ENCODE measurements at regions of chr1 and their contacts with region 1.

Region 1: DNA sequence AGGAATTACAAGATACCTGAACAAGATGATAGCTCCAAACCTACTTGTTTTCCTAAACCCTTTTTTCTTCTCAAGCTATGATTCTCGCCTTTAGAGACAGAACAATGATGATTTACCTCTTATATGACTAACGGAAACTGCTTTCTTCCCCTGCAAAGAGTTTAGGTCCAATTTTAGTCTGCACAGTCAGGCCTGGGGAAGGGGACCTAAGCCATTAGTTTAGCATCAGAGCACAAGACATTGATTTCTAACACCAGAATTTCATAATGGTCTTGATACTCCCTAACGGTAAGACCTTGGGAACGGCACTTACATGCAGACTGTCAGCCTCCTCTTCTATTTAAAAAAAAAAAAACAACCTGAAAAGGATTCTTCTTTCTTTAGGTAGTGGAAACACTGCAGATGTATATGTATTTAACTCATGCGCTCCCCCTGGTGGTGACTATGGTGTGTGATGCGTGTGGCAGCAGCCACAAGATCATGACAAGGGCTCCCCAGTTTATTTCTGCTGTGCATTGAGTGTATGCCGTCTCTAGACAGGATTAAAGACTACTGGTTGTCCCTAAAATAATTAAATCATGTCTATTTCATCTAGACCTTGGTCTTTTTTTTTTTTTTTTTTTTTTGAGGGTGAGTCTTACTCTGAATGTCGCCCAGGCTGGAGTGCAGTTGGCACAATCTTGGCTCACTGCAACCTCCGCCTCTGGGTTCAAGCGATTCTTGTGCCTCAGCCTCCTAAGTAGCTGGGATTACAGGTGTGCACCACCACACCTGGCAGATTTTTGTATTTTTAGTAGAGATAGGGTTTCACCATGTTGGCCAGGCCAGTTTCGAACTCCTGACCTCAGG is 37.3 kb upstream of the TMEM222 start:
- DNase-seq: peak; percentile 84
- ATAC-seq: peak; percentile 98
- H3K4me3 ChIP-seq: no peak overlapping the region
- H3K27ac ChIP-seq: no peak overlapping the region
- H3K4me1 ChIP-seq: no peaks in the 10 kb centered on the region
- H3K27me3 ChIP-seq: no peaks in the 10 kb centered on the region
- CTCF ChIP-seq: peak; percentile 89

Region 2: DNA sequence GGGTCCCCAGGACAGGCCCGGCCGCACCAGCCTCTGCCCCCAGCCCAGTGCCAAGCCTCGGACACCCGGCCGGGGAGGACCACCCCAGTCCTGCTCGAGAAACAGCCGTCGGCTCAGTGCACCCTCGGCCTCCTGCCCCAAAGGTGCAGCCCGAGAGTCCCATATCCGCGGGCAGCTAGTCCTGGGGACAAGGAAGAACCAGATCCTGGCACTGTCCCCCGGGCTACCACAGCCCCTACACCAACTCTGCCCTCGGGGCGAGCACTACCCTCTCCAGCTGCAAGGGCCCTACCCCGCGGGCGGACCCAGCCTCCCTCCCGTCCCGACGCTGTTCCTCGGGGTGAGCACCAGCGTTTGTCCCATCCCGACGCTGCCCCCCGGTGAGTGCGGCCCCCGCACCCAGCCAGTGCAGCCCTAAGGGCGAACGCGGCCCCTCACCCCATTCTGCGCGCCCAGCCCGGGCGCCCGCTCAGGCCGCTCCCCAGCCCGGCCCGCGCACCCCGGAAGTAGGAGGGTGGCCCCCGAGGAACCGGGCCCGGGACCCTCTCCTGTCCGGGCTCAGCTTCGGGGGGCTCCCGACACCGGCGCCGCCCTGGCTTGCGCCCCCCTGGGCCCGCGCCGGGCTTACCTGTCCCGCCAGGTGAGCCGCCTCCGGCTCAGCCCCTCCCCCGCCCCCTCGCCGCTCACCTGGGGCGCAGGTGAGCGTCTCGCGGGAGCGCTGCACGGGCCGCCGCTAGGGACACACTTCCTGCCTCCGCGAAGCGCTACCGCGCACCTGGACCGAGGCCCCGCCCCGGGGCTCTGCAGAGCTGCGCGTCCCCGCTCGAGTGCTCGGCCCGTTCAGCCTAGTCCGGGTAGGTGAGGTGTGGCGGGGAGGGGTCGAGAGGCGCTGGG is 324.7 kb before region 1 on chr1 and contains the start of gene KDF1:
- intact Hi-C with region 1: no loop called
- DNase-seq: peak; percentile 95
- ATAC-seq: peak; percentile 99
- H3K4me3 ChIP-seq: peak within 1 kb of the TSS; percentile 60
- H3K27ac ChIP-seq: peak within 1 kb of the TSS; percentile 60
- H3K4me1 ChIP-seq: no peaks in the 10 kb centered on the region
- H3K27me3 ChIP-seq: peaks cover 32% of the 10 kb centered on the region
- CTCF ChIP-seq: peak; percentile 16
- total RNA-seq, gene KDF1: 10.5 TPM

Region 3: DNA sequence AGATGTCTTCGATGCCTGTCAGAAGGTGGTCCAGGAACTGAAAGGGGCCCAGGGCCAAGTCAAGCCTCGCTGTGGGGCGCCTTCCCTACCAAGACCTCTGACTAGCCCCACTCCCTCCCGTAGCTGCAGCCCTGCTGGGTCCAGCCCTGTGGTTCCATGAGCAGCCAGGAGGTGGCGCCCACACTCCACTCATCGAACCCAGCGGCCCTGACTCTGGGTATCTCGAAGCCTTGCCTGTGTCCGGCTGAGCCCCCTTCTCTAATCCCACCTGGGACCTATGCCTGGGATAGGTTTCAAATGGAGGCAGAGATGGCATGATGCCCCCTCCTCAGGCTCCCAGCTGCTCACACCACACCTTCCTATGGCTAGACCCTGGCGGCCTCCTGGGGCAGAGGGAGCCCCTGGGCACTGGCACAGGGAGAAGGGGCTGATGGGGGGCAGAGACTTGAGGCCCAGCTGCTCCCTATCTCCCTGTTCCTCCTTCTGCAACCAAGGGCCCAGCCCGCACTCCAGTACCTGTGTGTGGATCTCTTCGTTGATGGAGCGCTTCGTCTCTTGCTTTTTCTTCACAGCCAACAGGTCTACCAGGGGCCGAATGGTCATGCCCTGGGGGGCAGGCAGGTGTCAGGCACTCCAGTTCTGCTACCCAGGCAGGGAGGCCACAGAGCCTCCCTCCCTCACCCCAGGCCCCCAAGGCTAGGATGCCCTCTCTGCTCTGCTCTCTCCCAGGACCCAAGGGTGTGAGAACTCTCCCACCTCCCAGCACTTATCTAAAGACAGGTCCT is 181.8 kb before region 1 on chr1:
- intact Hi-C with region 1: loop called (anchors 2 kb)
- DNase-seq: peak; percentile 89
- ATAC-seq: peak; percentile 72
- H3K4me3 ChIP-seq: no peak overlapping the region
- H3K27ac ChIP-seq: no peak overlapping the region
- H3K4me1 ChIP-seq: peaks cover 23% of the 10 kb centered on the region
- H3K27me3 ChIP-seq: no peaks in the 10 kb centered on the region
- CTCF ChIP-seq: peak; percentile 98

Region 4: GRCh38 chr1:27192039-27192529 is 92.6 kb before region 1 on chr1:
- intact Hi-C with region 1: loop called (anchors 10 kb)
- DNase-seq: no peak
- ATAC-seq: peak; percentile 80
- H3K4me3 ChIP-seq: no peak overlapping the region
- H3K27ac ChIP-seq: no peak overlapping the region
- H3K4me1 ChIP-seq: peaks cover 7% of the 10 kb centered on the region
- H3K27me3 ChIP-seq: no peaks in the 10 kb centered on the region
- CTCF ChIP-seq: no peak